ENCODE measurements at regions of chr5 and their contacts with region 1.

Region 1: GRCh38 chr5:115888027-115888426 is 46.3 kb downstream of the AP3S1 start:
- DNase-seq: no peak
- H3K4me3 ChIP-seq: no peak overlapping the region
- CTCF ChIP-seq: no peak
- POLR2A ChIP-seq: no peak

Region 2: GRCh38 chr5:116045821-116046220 is 157.8 kb after region 1 on chr5:
- intact Hi-C with region 1: loop called (anchors 10 kb)
- DNase-seq: no peak
- H3K4me3 ChIP-seq: no peak overlapping the region
- CTCF ChIP-seq: no peak
- POLR2A ChIP-seq: no peak